Common myeloid progenitor, CD34-positive (primary cell): ENCODE measurements at regions of chr2 and their contacts with region 1.

Region 1: GRCh38 chr2:218329027-218329825 is 27.4 kb upstream of the CATIP start:
- DNase-seq: peak in 2 of 3 donors; percentile 39 to 45
- H3K4me3 ChIP-seq: peak overlapping the region in 2 of 7 experiments; percentile 28 to 50
- H3K27ac ChIP-seq: peak overlapping the region; percentile 61 to 83
- H3K4me1 ChIP-seq: peaks cover 18 to 97% (median 93%) of the 10 kb centered on the region in 4 experiments
- H3K27me3 ChIP-seq: no peaks in the 10 kb centered on the region

Region 2: GRCh38 chr2:217890445-217890844 is 438.8 kb before region 1 on chr2:
- CTCF ChIA-PET with region 1: no interaction called
- POLR2A ChIA-PET with region 1: no interaction called
- DNase-seq: no peak
- H3K4me3 ChIP-seq: no peak overlapping the region
- H3K27ac ChIP-seq: no peak overlapping the region
- H3K4me1 ChIP-seq: no peaks in the 10 kb centered on the region
- H3K27me3 ChIP-seq: no peaks in the 10 kb centered on the region

Region 3: DNA sequence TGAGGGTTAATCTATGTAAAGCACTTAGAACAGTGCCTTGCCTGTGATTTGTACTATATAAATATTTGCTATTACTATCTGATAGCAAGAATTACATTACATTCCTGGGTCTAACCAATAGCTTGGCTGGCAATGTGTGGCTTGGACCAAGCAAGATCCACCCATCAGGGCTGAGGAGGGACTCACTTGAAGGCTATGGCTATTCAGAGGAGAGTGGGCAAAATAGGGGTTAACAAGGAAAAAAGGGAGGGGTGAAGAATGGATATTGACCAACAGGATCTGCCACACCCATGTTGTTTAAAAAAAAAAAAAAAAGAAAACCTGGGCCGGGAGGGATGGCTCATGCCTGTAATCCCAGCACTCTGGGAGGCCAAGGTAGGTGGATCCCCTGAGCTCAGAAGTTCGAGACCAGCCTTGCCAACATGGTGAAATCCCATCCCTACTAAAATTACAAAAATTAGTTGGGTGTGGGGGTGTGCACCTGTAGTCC is 16.9 kb before region 1 on chr2:
- CTCF ChIA-PET with region 1: interaction called, 340 read pairs
- POLR2A ChIA-PET with region 1: interaction called, 14 read pairs
- DNase-seq: no peak
- H3K4me3 ChIP-seq: no peak overlapping the region
- H3K27ac ChIP-seq: no peak overlapping the region
- H3K4me1 ChIP-seq: peaks cover 14 to 47% (median 28%) of the 10 kb centered on the region in 4 experiments
- H3K27me3 ChIP-seq: no peaks in the 10 kb centered on the region

Region 4: DNA sequence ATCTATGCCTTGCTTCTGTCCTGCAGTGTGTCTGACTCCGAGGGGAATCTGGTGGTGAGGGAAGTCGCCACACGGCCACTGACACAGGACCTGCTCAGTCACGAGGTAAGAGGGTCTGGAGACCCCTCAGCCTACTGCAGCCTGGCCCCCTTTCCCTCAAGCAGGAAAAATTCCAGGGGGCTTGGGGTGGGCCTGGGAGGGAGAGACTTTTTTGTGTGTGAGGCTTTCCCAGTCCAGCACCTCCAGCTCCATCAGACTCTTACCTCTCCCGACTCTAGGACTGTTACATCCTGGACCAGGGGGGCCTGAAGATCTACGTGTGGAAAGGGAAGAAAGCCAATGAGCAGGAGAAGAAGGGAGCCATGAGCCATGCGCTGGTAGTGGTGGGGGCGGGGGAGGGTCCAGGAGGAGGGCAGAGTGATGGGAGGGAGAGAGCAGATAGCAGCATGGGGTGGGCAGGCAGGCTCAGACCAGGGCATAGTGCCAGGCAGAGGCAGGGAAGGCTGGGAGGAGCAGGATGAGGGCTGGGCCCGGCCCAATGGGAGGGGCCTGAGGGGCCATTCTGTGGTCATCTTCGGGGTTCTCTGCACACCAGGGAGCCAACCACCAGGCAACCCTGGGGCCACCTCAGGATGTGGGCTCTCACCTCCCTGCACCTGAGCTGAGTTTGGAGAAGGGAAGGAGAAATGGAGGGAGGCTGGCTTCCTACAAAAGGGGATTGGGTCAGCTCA is 100.5 kb after region 1 on chr2:
- CTCF ChIA-PET with region 1: no interaction called
- POLR2A ChIA-PET with region 1: no interaction called
- DNase-seq: no peak
- H3K4me3 ChIP-seq: no peak overlapping the region
- H3K27ac ChIP-seq: no peak overlapping the region
- H3K4me1 ChIP-seq: no peaks in the 10 kb centered on the region
- H3K27me3 ChIP-seq: no peaks in the 10 kb centered on the region